ENCODE measurements at regions of chr22 and their contacts with region 1.

Region 1: DNA sequence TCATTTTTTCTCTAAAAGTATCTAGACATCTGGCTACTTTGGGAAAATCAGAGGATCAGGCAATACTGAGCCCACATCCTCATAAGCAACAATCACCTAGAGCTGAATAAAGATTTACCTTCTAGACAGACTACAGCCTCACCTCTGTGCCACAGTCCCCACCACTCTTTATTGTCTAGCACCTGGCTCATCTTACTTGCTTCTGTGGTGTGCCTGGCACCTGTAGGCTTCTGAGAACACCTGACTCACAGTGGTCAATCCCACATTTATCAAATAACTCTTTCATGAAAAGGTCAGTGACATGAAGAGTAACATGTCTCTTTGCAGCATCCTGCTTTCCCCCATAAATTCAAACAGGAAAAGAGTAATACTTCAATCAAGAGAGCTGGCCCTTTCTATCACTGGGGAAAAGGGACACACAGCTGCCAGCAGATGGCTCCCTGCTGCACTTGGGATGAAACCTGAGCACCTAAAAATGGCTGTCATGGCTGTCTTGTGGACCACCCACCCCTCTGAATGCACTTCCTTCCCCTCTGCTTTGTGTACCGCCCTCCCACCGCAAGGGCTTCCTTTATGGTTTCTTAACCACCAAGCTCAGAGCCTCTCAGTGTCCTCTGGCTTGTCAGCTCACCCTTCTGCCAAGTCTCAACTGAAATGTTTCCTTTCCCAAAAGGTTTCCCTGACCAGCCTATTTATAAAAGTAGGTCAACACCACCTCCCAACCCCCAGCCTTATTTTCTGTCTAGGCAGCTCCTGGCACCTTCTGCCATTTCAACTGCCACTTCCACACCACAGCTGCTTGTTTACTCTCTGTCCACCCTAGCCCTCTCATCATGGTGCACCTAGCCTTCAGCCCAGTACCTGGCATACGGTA is 9.3 kb downstream of the TFIP11 start:
- DNase-seq: peak; percentile 95
- ATAC-seq: peak; percentile 95
- H3K4me3 Mint-ChIP-seq: peak overlapping the region; percentile 29
- H3K27ac Mint-ChIP-seq: peak overlapping the region; percentile 87
- H3K4me1 Mint-ChIP-seq: peaks cover 33% of the 10 kb centered on the region
- H3K27me3 Mint-ChIP-seq: no peaks in the 10 kb centered on the region

Region 2: GRCh38 chr22:26342745-26343410 is 160.0 kb before region 1 on chr22:
- CTCF ChIA-PET with region 1: no interaction called
- DNase-seq: no peak
- ATAC-seq: no peak
- H3K4me3 Mint-ChIP-seq: no peak overlapping the region
- H3K27ac Mint-ChIP-seq: no peak overlapping the region
- H3K4me1 Mint-ChIP-seq: no peaks in the 10 kb centered on the region
- H3K27me3 Mint-ChIP-seq: peaks cover 31% of the 10 kb centered on the region

Region 3: GRCh38 chr22:26450453-26451185 is 52.3 kb before region 1 on chr22:
- CTCF ChIA-PET with region 1: no interaction called
- DNase-seq: no peak
- ATAC-seq: no peak
- H3K4me3 Mint-ChIP-seq: no peak overlapping the region
- H3K27ac Mint-ChIP-seq: no peak overlapping the region
- H3K4me1 Mint-ChIP-seq: no peaks in the 10 kb centered on the region
- H3K27me3 Mint-ChIP-seq: no peaks in the 10 kb centered on the region

Region 4: DNA sequence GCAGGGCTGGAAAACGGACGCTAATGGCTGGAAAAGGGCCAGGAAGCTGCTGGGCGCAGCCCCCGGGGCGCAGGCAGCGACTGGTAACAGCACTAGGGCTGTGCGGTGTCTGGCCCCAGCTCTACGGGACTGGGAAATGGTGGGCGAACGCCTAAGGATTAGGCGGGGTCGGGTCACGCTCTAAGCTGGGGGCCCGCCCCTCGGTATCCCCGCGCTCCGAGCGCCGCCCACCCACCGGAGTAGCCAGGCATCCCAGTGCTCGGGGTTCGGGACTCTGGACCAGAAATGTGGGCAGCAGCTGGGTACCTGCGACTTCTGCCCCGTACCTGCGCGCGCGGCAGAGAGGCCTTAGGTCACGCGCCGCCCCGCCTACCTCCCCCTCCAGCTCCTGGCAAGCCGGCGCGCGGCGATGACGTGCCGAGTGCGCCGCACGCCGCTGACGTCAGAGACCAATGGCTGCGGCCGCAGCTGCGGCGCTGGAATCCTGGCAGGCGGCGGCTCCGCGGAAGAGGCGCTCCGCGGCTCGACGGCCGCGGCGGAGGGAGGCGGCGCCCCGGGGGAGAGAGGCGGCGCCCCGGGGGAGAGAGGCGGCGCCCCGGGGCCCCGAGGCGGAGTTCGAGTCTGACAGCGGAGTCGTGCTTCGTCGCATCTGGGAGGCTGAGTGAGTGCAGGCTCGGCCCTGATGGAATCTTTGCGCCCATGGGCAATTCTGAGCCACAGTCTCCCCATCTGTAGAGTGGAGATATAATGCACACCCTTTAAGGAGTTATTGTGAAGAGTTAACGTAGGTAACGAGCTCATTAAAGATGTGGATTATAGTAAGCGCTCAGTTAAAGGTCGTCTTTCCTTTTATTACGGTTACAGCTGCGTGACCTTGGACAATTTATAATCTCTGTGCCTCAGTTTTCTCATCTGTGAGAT is 19.2 kb before region 1 on chr22 and contains the starts of genes HPS4 and SRRD:
- CTCF ChIA-PET with region 1: interaction called, 48 read pairs
- DNase-seq: peak; percentile 92
- ATAC-seq: peak; percentile 84
- H3K4me3 Mint-ChIP-seq: peak within 1 kb of the TSS; percentile 93
- H3K27ac Mint-ChIP-seq: peak within 1 kb of the TSS; percentile 88
- H3K4me1 Mint-ChIP-seq: peaks cover 67% of the 10 kb centered on the region
- H3K27me3 Mint-ChIP-seq: no peaks in the 10 kb centered on the region
- total RNA-seq, gene HPS4: 39.3 to 41.2 TPM
- total RNA-seq, gene SRRD: 17.5 to 22.6 TPM

Region 5: DNA sequence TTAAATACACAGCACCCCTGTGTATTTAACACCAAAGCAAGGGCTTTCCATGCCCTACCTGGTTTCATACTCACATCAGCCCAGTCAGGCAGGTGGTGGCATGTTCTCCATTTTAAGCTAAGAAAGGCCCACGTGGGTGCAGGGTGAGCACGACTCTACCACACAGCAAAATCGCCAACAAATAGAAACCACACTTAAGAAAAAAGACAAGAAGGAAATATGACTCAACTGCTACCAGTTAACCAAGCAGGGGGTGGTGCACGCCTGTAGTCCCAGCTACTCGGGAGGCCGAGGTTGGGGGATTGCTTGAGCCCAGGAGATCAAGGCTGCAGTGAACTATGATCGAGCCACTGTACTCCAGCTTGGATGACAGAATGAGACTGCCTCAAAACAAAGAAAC is 44.5 kb after region 1 on chr22:
- CTCF ChIA-PET with region 1: interaction called, 14 read pairs
- DNase-seq: peak; percentile 73
- ATAC-seq: peak; percentile 80
- H3K4me3 Mint-ChIP-seq: no peak overlapping the region
- H3K27ac Mint-ChIP-seq: peak overlapping the region; percentile 82
- H3K4me1 Mint-ChIP-seq: peaks cover 58% of the 10 kb centered on the region
- H3K27me3 Mint-ChIP-seq: no peaks in the 10 kb centered on the region

Region 6: GRCh38 chr22:26642465-26643417 is 139.8 kb after region 1 on chr22:
- CTCF ChIA-PET with region 1: interaction called, 10 read pairs
- DNase-seq: peak; percentile 94
- ATAC-seq: peak; percentile 88
- H3K4me3 Mint-ChIP-seq: peak overlapping the region; percentile 56
- H3K27ac Mint-ChIP-seq: peak overlapping the region; percentile 95
- H3K4me1 Mint-ChIP-seq: peaks cover 78% of the 10 kb centered on the region
- H3K27me3 Mint-ChIP-seq: no peaks in the 10 kb centered on the region

Region 7: DNA sequence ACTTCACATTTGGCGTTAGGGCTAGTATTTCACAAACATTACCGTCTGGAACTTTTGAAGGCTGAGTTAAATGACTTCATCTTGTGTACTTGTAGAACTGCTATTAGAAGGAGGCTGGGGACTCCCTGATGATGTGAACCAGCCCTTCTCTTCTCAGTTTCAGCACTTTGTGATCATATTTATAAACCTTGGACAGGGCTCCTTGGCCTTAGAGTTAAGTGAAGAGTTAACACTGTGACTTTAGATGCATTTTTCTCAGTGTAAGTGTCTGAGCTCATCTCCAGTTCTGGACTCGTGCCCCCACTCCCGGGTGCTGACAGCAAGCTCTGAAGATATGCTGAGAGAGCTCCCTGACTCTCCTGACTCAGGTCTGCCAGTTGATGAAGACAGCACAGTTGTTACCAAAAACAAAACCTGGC is 162.9 kb after region 1 on chr22:
- CTCF ChIA-PET with region 1: interaction called, 69 read pairs
- DNase-seq: no peak
- ATAC-seq: peak; percentile 14
- H3K4me3 Mint-ChIP-seq: no peak overlapping the region
- H3K27ac Mint-ChIP-seq: peak overlapping the region; percentile 86
- H3K4me1 Mint-ChIP-seq: peaks cover 76% of the 10 kb centered on the region
- H3K27me3 Mint-ChIP-seq: no peaks in the 10 kb centered on the region

Region 8: GRCh38 chr22:26672590-26673468 is 169.9 kb after region 1 on chr22:
- CTCF ChIA-PET with region 1: interaction called, 69 read pairs
- DNase-seq: peak; percentile 98
- ATAC-seq: peak; percentile 67
- H3K4me3 Mint-ChIP-seq: peak overlapping the region; percentile 93
- H3K27ac Mint-ChIP-seq: peak overlapping the region; percentile 97
- H3K4me1 Mint-ChIP-seq: peaks cover 70% of the 10 kb centered on the region
- H3K27me3 Mint-ChIP-seq: no peaks in the 10 kb centered on the region